ENCODE measurements at regions of chr20 and their contacts with region 1.

Region 1: GRCh38 chr20:50165684-50166554 is 12.4 kb upstream of the PEDS1 start:
- DNase-seq: peak; percentile 99
- H3K4me3 Mint-ChIP-seq: peak overlapping the region; percentile 63
- H3K27ac Mint-ChIP-seq: peak overlapping the region; percentile 94
- H3K4me1 Mint-ChIP-seq: peaks cover 44% of the 10 kb centered on the region
- H3K27me3 Mint-ChIP-seq: no peaks in the 10 kb centered on the region
- CTCF ChIP-seq: no peak

Region 2: GRCh38 chr20:50070991-50071888 is 94.7 kb before region 1 on chr20:
- CTCF ChIA-PET with region 1: interaction called, 5 read pairs
- intact Hi-C with region 1: loop called (anchors 5 kb)
- DNase-seq: peak; percentile 99
- H3K4me3 Mint-ChIP-seq: peak overlapping the region; percentile 70
- H3K27ac Mint-ChIP-seq: no peak overlapping the region
- H3K4me1 Mint-ChIP-seq: peaks cover 9% of the 10 kb centered on the region
- H3K27me3 Mint-ChIP-seq: peaks cover 28% of the 10 kb centered on the region
- CTCF ChIP-seq: peak; percentile 100

Region 3: GRCh38 chr20:50120897-50121693 is 44.8 kb before region 1 on chr20:
- CTCF ChIA-PET with region 1: interaction called, 75 read pairs
- intact Hi-C with region 1: loop called (anchors 1 kb)
- DNase-seq: peak; percentile 84
- H3K4me3 Mint-ChIP-seq: no peak overlapping the region
- H3K27ac Mint-ChIP-seq: peak overlapping the region; percentile 39
- H3K4me1 Mint-ChIP-seq: peaks cover 12% of the 10 kb centered on the region
- H3K27me3 Mint-ChIP-seq: no peaks in the 10 kb centered on the region
- CTCF ChIP-seq: peak; percentile 98

Region 4: GRCh38 chr20:50153485-50154377 is 12.2 kb before region 1 on chr20 and contains the start of gene PEDS1:
- CTCF ChIA-PET with region 1: interaction called, 11 read pairs
- intact Hi-C with region 1: no loop called
- DNase-seq: peak; percentile 96
- H3K4me3 Mint-ChIP-seq: peak within 1 kb of the TSS; percentile 78
- H3K27ac Mint-ChIP-seq: peak within 1 kb of the TSS; percentile 83
- H3K4me1 Mint-ChIP-seq: peaks cover 36% of the 10 kb centered on the region
- H3K27me3 Mint-ChIP-seq: no peaks in the 10 kb centered on the region
- CTCF ChIP-seq: no peak
- total RNA-seq, gene PEDS1: 36.0 and 37.5 TPM in 2 replicates

Region 5: DNA sequence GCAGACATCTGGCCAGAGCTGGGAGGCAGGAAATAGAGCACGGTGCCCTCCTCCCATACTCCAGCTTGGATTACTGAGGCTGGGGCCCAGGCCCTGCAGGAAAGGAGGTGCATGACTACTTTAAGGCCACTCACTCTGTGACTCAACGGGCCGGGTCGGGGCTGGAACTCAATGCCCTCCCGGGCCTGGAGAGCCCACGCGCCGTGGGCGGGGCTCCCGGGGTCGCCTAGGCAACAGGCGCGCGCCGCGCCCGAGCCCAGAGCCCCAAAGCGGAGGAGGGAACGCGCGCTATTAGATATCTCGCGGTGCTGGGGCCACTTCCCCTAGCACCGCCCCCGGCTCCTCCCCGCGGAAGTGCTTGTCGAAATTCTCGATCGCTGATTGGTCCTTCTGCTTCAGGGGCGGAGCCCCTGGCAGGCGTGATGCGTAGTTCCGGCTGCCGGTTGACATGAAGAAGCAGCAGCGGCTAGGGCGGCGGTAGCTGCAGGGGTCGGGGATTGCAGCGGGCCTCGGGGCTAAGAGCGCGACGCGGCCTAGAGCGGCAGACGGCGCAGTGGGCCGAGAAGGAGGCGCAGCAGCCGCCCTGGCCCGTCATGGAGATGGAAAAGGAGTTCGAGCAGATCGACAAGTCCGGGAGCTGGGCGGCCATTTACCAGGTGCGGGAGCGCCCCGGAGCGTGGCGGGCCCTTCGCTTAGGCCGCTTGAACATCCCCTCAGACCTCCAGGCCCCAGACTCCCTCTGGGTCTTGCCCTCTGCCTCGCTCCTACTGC is 344.2 kb after region 1 on chr20 and contains the start of gene PTPN1:
- CTCF ChIA-PET with region 1: no interaction called
- intact Hi-C with region 1: no loop called
- DNase-seq: peak; percentile 100
- H3K4me3 Mint-ChIP-seq: peak within 1 kb of the TSS; percentile 90
- H3K27ac Mint-ChIP-seq: peak within 1 kb of the TSS; percentile 88
- H3K4me1 Mint-ChIP-seq: peaks cover 38% of the 10 kb centered on the region
- H3K27me3 Mint-ChIP-seq: no peaks in the 10 kb centered on the region
- CTCF ChIP-seq: peak; percentile 7
- total RNA-seq, gene PTPN1: 58.5 and 67.5 TPM in 2 replicates

Region 6: DNA sequence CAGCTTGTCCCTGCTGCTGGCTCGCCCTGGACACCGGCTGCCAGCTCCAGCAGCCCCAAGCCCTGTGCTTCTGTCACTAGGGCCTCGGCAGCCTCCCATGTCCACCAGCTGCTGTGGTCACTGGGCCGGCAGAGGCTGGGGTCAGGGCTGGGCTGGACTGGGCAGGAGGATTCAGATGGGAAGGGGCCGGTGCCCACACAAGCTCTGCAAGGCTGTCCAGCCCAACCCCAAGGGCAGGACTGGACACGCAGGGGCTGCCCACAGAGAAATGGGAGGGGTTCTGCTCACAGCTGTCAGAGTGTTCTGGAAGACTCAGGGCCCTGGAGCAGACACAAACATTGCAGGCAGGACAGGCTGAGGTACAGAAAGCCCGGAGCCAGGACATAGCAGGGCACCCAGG is 699.7 kb after region 1 on chr20:
- CTCF ChIA-PET with region 1: no interaction called
- intact Hi-C with region 1: no loop called
- DNase-seq: no peak
- H3K4me3 Mint-ChIP-seq: no peak overlapping the region
- H3K27ac Mint-ChIP-seq: no peak overlapping the region
- H3K4me1 Mint-ChIP-seq: peaks cover 18% of the 10 kb centered on the region
- H3K27me3 Mint-ChIP-seq: no peaks in the 10 kb centered on the region
- CTCF ChIP-seq: no peak